B cell (primary cell): ENCODE measurements at regions of chr19 and their contacts with region 1.

Region 1: DNA sequence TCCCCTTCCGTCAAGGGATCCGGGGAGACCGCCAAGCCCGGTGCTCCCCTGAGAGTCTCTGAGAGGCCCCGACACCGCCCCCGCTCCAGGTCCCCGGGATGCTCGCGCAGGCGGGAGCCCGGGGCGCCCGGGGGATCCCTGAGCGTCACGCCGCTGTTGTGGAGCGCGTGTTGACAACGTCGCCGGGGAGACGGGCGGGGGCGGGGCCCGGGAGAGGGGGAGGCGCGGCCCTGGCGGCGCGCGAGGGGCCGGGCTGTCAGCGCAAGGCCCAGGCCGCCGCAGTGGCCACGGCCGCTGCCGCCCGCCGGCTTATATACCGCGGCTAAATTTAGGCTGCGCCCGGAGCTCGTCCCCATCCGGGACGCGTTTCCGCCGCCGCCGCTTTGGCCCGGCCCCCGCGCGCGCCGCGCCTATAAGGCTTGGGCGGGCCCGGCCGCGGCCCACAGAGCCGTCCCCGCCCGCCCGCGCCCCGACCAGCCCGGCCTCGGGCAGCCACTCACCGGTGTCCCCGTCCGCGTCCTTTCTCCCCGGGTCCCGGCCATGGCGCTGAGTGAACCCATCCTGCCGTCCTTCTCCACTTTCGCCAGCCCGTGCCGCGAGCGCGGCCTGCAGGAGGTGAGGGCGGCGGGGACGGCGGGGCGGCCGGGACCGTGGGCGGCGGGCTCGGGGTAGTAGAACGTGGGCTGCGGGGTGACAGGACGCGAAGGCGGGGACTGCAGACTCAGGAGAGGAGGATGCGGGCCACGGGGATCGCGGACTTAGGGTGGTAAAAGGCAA is at the start of gene KLF2:
- DNase-seq: peak; percentile 99
- ATAC-seq: peak; percentile 59
- H3K4me3 ChIP-seq: peak within 1 kb of the TSS; percentile 35 to 100 (median 98)
- H3K4me3 Mint-ChIP-seq: peak within 1 kb of the TSS; percentile 76
- H3K27ac ChIP-seq: peak within 1 kb of the TSS; percentile 99
- H3K27ac Mint-ChIP-seq: peak within 1 kb of the TSS; percentile 91
- H3K4me1 ChIP-seq: peaks cover 42 to 55% of the 10 kb centered on the region in 2 donors
- H3K4me1 Mint-ChIP-seq: peaks cover 61% of the 10 kb centered on the region
- H3K27me3 ChIP-seq: no peaks in the 10 kb centered on the region
- H3K27me3 Mint-ChIP-seq: no peaks in the 10 kb centered on the region
- CTCF ChIP-seq: no peak
- total RNA-seq, gene KLF2: 241 and 242 TPM in 2 replicates

Region 2: GRCh38 chr19:16197622-16198369 is 126.8 kb before region 1 on chr19 and contains the start of gene AP1M1:
- CTCF ChIA-PET with region 1: no interaction called
- POLR2A ChIA-PET with region 1: interaction called, 8 read pairs
- intact Hi-C with region 1: loop called (anchors 5 kb)
- DNase-seq: peak; percentile 99
- ATAC-seq: peak; percentile 93
- H3K4me3 ChIP-seq: peak within 1 kb of the TSS; percentile 67 to 92 (median 87)
- H3K4me3 Mint-ChIP-seq: peak within 1 kb of the TSS; percentile 93
- H3K27ac ChIP-seq: peak within 1 kb of the TSS; percentile 66 to 92
- H3K27ac Mint-ChIP-seq: peak within 1 kb of the TSS; percentile 98
- H3K4me1 ChIP-seq: peaks cover 18 to 28% of the 10 kb centered on the region in 2 donors
- H3K4me1 Mint-ChIP-seq: peaks cover 35% of the 10 kb centered on the region
- H3K27me3 ChIP-seq: no peaks in the 10 kb centered on the region
- H3K27me3 Mint-ChIP-seq: no peaks in the 10 kb centered on the region
- CTCF ChIP-seq: no peak
- total RNA-seq, gene AP1M1: 90.4 and 102 TPM in 2 replicates

Region 3: GRCh38 chr19:16259385-16260159 is 65.0 kb before region 1 on chr19:
- CTCF ChIA-PET with region 1: interaction called, 11 read pairs
- POLR2A ChIA-PET with region 1: interaction called, 67 read pairs
- intact Hi-C with region 1: loop called (anchors 1 kb)
- DNase-seq: peak; percentile 94
- ATAC-seq: peak; percentile 79
- H3K4me3 ChIP-seq: peak overlapping the region in 1 of 5 experiments; percentile 42
- H3K4me3 Mint-ChIP-seq: peak overlapping the region; percentile 78
- H3K27ac ChIP-seq: peak overlapping the region; percentile 87 to 89
- H3K27ac Mint-ChIP-seq: peak overlapping the region; percentile 95
- H3K4me1 ChIP-seq: peaks cover 75 to 94% of the 10 kb centered on the region in 2 donors
- H3K4me1 Mint-ChIP-seq: peaks cover 83% of the 10 kb centered on the region
- H3K27me3 ChIP-seq: no peaks in the 10 kb centered on the region
- H3K27me3 Mint-ChIP-seq: no peaks in the 10 kb centered on the region
- CTCF ChIP-seq: no peak

Region 4: DNA sequence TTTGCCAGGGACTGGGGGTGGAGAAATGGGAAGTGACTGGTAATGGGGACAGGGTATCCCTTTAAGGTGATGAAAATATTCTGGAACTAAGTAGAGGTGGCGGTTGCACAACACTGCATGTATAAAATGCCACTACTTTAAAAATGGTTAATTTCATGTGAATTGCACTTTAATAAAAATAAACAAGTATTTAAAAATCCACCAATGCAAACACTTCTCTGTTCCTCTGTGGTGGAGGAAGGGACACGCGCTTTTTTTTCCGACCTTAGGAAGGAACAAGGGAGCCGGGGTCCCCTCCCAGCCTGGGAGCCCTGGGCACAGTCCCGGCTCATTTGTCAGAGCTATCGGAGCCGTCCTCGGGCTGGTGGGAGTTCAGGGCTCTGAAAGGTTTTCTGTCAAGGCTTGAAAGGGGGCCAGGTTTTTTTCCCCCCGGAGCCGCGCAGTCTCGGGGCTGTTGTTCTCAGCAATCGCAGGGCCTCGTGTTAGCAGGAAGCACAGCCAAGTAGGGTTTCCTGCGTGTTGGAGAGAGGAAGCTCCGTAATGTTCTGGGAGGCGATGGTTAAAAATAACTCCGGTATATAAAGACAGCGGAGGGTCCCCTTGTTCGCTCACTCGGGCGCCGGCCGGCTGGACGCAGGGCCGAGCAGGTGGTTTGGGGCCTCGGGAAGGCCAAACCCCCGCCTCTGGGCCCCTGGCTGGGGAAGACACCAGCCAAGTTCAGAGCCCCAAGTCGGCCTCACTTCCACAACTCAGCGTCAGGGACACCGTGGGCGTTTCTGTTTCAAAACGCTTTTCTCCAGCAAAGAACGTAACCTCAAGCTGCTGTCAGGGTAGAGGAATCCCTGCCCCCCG is 41.1 kb before region 1 on chr19:
- CTCF ChIA-PET with region 1: interaction called, 4 read pairs
- POLR2A ChIA-PET with region 1: interaction called, 4 read pairs
- intact Hi-C with region 1: loop called (anchors 5 kb)
- DNase-seq: peak; percentile 66
- ATAC-seq: peak; percentile 69
- H3K4me3 ChIP-seq: peak overlapping the region; percentile 9 to 68 (median 30)
- H3K4me3 Mint-ChIP-seq: peak overlapping the region; percentile 77
- H3K27ac ChIP-seq: peak overlapping the region; percentile 51 to 73
- H3K27ac Mint-ChIP-seq: peak overlapping the region; percentile 82
- H3K4me1 ChIP-seq: peaks cover 37 to 45% of the 10 kb centered on the region in 2 donors
- H3K4me1 Mint-ChIP-seq: peaks cover 51% of the 10 kb centered on the region
- H3K27me3 ChIP-seq: no peaks in the 10 kb centered on the region
- H3K27me3 Mint-ChIP-seq: no peaks in the 10 kb centered on the region
- CTCF ChIP-seq: no peak

Region 5: GRCh38 chr19:16301999-16302694 is 22.4 kb before region 1 on chr19:
- CTCF ChIA-PET with region 1: no interaction called
- POLR2A ChIA-PET with region 1: interaction called, 14 read pairs
- intact Hi-C with region 1: loop called (anchors 1 kb)
- DNase-seq: peak; percentile 46
- ATAC-seq: peak; percentile 78
- H3K4me3 ChIP-seq: no peak overlapping the region
- H3K4me3 Mint-ChIP-seq: peak overlapping the region; percentile 33
- H3K27ac ChIP-seq: peak overlapping the region; percentile 44 to 48
- H3K27ac Mint-ChIP-seq: peak overlapping the region; percentile 76
- H3K4me1 ChIP-seq: peaks cover 0 to 15% of the 10 kb centered on the region in 2 donors
- H3K4me1 Mint-ChIP-seq: peaks cover 13% of the 10 kb centered on the region
- H3K27me3 ChIP-seq: no peaks in the 10 kb centered on the region
- H3K27me3 Mint-ChIP-seq: no peaks in the 10 kb centered on the region
- CTCF ChIP-seq: no peak